HepG2 (cell line): ENCODE measurements at regions of chr10 and their contacts with region 1.

Region 1: GRCh38 chr10:97407211-97407951 is 6.2 kb upstream of the RRP12 start:
- DNase-seq: peak; percentile 89
- ATAC-seq: peak; percentile 92
- H3K4me3 ChIP-seq: peak overlapping the region; percentile 13 to 63 (median 32); a peak in 5 of 6 replicates
- H3K27ac ChIP-seq: peak overlapping the region; percentile 77
- H3K4me1 ChIP-seq: peaks cover 48% of the 10 kb centered on the region
- H3K27me3 ChIP-seq: no peaks in the 10 kb centered on the region
- CTCF ChIP-seq: peak; percentile 92
- EP300 ChIP-seq: no peak
- POLR2A ChIP-seq: no peak
- RAD21 ChIP-seq: peak; percentile 91

Region 2: GRCh38 chr10:96935148-96935547 is 472.2 kb before region 1 on chr10:
- CTCF ChIA-PET with region 1: no interaction called
- POLR2A ChIA-PET with region 1: no interaction called
- in situ Hi-C with region 1: no loop called
- intact Hi-C with region 1: no loop called
- DNase-seq: no peak
- ATAC-seq: no peak
- H3K4me3 ChIP-seq: no peak overlapping the region
- H3K27ac ChIP-seq: no peak overlapping the region
- H3K4me1 ChIP-seq: no peaks in the 10 kb centered on the region
- H3K27me3 ChIP-seq: no peaks in the 10 kb centered on the region
- CTCF ChIP-seq: no peak
- EP300 ChIP-seq: no peak
- POLR2A ChIP-seq: no peak
- RAD21 ChIP-seq: no peak

Region 3: GRCh38 chr10:97388152-97388551 is 19.2 kb before region 1 on chr10:
- CTCF ChIA-PET with region 1: no interaction called
- POLR2A ChIA-PET with region 1: no interaction called
- in situ Hi-C with region 1: no loop called
- intact Hi-C with region 1: no loop called
- DNase-seq: no peak
- ATAC-seq: no peak
- H3K4me3 ChIP-seq: no peak overlapping the region
- H3K27ac ChIP-seq: no peak overlapping the region
- H3K4me1 ChIP-seq: no peaks in the 10 kb centered on the region
- H3K27me3 ChIP-seq: no peaks in the 10 kb centered on the region
- CTCF ChIP-seq: no peak
- EP300 ChIP-seq: no peak
- POLR2A ChIP-seq: no peak
- RAD21 ChIP-seq: no peak

Region 4: DNA sequence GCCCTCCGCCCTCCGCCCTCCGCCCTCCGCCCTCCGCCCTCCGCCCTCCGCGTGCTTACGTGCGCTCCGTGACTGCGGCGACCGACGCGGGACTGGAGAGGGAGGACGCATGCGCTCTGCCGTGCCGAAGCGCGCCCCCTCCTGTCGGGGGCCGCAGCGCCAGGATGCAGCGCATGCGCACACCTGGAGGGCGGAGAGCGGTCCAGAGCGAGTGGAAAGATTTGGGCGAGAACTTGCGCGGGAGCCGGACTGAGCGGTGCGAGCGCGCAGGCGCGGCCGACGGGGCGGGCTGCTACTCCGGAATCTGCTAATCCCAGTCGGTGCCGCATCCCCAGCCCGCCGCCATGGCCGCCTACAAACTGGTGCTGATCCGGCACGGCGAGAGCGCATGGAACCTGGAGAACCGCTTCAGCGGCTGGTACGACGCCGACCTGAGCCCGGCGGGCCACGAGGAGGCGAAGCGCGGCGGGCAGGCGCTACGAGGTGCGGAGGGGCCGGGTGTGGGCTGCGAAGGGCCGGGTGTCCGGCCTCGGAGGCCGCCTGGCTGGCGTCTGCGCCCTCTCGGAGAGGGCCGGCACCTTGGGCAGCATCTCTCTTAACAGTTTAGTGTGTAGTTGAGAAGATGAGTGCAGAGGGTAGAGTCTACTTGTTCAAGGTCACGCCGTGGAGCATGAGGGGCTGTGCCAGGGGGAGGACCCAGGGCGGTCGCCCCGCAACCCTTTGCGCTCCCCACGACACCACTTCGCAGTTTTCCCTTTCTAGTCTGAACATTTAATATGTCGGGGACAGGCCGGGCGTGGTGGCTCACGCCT is 18.8 kb after region 1 on chr10 and contains the start of gene PGAM1:
- CTCF ChIA-PET with region 1: interaction called, 14 read pairs
- POLR2A ChIA-PET with region 1: interaction called, 7 read pairs
- in situ Hi-C with region 1: no loop called
- intact Hi-C with region 1: loop called (anchors 1 kb)
- DNase-seq: peak; percentile 89
- ATAC-seq: peak; percentile 83
- H3K4me3 ChIP-seq: peak within 1 kb of the TSS; percentile 86 to 98 (median 96)
- H3K27ac ChIP-seq: peak within 1 kb of the TSS; percentile 89
- H3K4me1 ChIP-seq: peaks cover 46% of the 10 kb centered on the region
- H3K27me3 ChIP-seq: no peaks in the 10 kb centered on the region; a peak in 1 of 5 replicates
- CTCF ChIP-seq: peak; percentile 96
- EP300 ChIP-seq: 0 out of 4 replicates have a peak, but pooled peaks of 1 of the 2 experiments have one; percentile 30
- POLR2A ChIP-seq: peak; percentile 67 to 81
- RAD21 ChIP-seq: peak; percentile 26
- total RNA-seq, gene PGAM1: 354 and 442 TPM in 2 replicates

Region 5: GRCh38 chr10:97445722-97446639 is 38.6 kb after region 1 on chr10 and contains the starts of genes EXOSC1 and ZDHHC16:
- CTCF ChIA-PET with region 1: interaction called, 12 read pairs
- POLR2A ChIA-PET with region 1: no interaction called
- in situ Hi-C with region 1: no loop called
- intact Hi-C with region 1: loop called (anchors 1 kb)
- DNase-seq: peak; percentile 97
- ATAC-seq: peak; percentile 95
- H3K4me3 ChIP-seq: peak within 1 kb of the TSS; percentile 83 to 99 (median 93)
- H3K27ac ChIP-seq: peak within 1 kb of the TSS; percentile 60
- H3K4me1 ChIP-seq: peaks cover 43% of the 10 kb centered on the region
- H3K27me3 ChIP-seq: no peaks in the 10 kb centered on the region; a peak in 1 of 5 replicates
- CTCF ChIP-seq: peak; percentile 42
- EP300 ChIP-seq: no peak; a peak in 1 of 4 replicates
- POLR2A ChIP-seq: peak; percentile 73 to 84
- RAD21 ChIP-seq: peak; percentile 3; the same call in 1 of the 2 replicates
- total RNA-seq, gene EXOSC1: 39.9 and 47.6 TPM in 2 replicates
- total RNA-seq, gene ZDHHC16: 30.2 and 41.8 TPM in 2 replicates

Region 6: DNA sequence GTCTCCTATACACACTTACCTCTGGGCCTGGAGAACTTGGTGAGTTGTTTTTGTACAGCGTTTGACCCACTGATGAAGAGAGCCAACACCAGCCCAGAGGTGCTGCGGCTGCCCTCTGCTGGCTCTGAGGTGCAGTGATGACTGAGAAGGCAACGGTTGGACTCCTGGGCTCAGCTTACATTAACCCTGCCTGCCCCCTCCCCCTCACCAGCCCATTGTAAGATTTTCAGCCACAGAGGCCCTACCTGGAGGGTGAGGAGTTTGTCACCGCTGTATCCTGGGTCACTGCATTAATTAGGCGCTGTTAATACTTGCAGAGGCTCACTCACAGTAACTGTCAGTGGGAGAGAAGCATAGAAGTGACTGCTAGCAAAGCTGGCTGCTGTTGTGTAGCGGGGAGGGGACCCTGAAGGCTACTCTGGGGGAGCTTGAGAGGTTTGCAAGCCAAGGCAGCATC is 146.2 kb after region 1 on chr10:
- CTCF ChIA-PET with region 1: no interaction called
- POLR2A ChIA-PET with region 1: no interaction called
- in situ Hi-C with region 1: no loop called
- intact Hi-C with region 1: loop called (anchors 1 kb)
- DNase-seq: peak; percentile 62
- ATAC-seq: peak; percentile 98
- H3K4me3 ChIP-seq: no peak overlapping the region
- H3K27ac ChIP-seq: no peak overlapping the region
- H3K4me1 ChIP-seq: peaks cover 35% of the 10 kb centered on the region
- H3K27me3 ChIP-seq: no peaks in the 10 kb centered on the region
- CTCF ChIP-seq: peak; percentile 95
- EP300 ChIP-seq: no peak
- POLR2A ChIP-seq: no peak
- RAD21 ChIP-seq: peak; percentile 72

Region 7: GRCh38 chr10:97612386-97612785 is 205.0 kb after region 1 on chr10:
- CTCF ChIA-PET with region 1: no interaction called
- POLR2A ChIA-PET with region 1: no interaction called
- in situ Hi-C with region 1: no loop called
- intact Hi-C with region 1: loop called (anchors 1 kb)
- DNase-seq: peak; percentile 45
- ATAC-seq: peak; percentile 91
- H3K4me3 ChIP-seq: no peak overlapping the region
- H3K27ac ChIP-seq: no peak overlapping the region
- H3K4me1 ChIP-seq: no peaks in the 10 kb centered on the region
- H3K27me3 ChIP-seq: no peaks in the 10 kb centered on the region
- CTCF ChIP-seq: peak; percentile 72
- EP300 ChIP-seq: no peak
- POLR2A ChIP-seq: no peak
- RAD21 ChIP-seq: peak; percentile 68